Heart left ventricle (tissue), 16 donors: ENCODE measurements at regions of chr7 and their contacts with region 1.

Region 1: DNA sequence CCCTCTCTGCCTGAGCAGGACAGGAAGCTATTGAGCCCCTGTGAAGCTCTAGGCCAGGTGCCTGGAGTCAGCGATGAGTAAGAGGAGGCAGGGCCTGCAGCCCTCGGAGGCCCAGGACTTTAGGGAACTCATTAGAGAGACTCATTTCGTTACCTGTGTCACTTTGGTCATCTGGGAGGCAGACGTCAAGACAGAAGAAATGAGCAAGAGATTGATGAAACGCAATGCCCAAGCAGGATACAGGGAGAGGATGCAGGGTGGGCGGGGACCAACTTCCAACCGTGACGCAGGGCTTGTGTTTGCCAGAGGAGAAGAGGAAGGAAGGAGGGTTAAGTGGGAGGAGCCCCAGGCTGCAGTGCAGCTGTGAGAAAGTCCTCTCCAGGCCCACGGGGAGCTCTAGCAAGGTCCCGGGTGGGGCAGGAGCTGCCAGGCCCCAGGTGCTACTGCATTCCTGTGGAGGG is 26.4 kb upstream of the GNA12 start:
- DNase-seq: peak; percentile 77 to 88 (median 82)
- ATAC-seq: peak; percentile 52 to 95 (median 88)
- H3K4me3 ChIP-seq: peak overlapping the region in 8 of 12 donors; percentile 6 to 44 (median 28)
- H3K27ac ChIP-seq: peak overlapping the region in 7 of 12 donors; percentile 1 to 68 (median 44)
- H3K4me1 ChIP-seq: peaks cover 0 to 16% (median 6%) of the 10 kb centered on the region in 12 donors
- H3K27me3 ChIP-seq: no peaks in the 10 kb centered on the region
- CTCF ChIP-seq: no peak
- POLR2A ChIP-seq: no peak

Region 2: DNA sequence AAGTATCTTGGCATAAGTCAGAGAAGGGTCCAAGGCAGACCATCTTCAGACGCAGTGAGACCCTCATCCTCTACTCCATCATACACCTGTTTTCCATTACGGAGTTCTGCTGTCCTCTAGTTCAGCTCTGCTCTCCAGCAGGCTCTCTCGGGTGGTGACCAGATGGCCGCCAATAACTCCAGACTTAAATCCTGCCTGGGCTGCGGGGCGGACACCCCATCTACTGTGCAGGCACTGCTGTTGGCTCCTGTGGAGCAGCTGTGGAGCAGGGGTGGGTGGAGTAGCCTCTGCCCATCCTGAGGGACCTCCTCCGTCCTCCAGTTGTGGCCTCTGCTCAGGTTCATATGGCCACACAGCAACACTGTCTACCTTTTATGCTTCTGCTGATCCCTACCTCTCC is 1038.6 kb after region 1 on chr7:
- intact Hi-C with region 1: loop called in 1 of 10 experiments (anchors 10 kb)
- DNase-seq: no peak
- ATAC-seq: no peak
- H3K4me3 ChIP-seq: no peak overlapping the region
- H3K27ac ChIP-seq: no peak overlapping the region
- H3K4me1 ChIP-seq: no peaks in the 10 kb centered on the region
- H3K27me3 ChIP-seq: no peaks in the 10 kb centered on the region
- CTCF ChIP-seq: no peak
- POLR2A ChIP-seq: no peak